Activated CD4-positive, alpha-beta memory T cell treated with anti-CD3 and anti-CD28 coated beads for 36 hours (primary cell): ENCODE measurements at regions of chr2 and their contacts with region 1.

Region 1: GRCh38 chr2:86440631-86441391 is at the start of gene KDM3A:
- DNase-seq: peak; percentile 100
- H3K4me3 Mint-ChIP-seq: peak within 1 kb of the TSS; percentile 94
- H3K27ac Mint-ChIP-seq: peak within 1 kb of the TSS; percentile 100
- H3K4me1 Mint-ChIP-seq: peaks cover 37% of the 10 kb centered on the region
- H3K27me3 Mint-ChIP-seq: no peaks in the 10 kb centered on the region
- total RNA-seq, gene KDM3A: 55.6 to 64.9 TPM

Region 2: DNA sequence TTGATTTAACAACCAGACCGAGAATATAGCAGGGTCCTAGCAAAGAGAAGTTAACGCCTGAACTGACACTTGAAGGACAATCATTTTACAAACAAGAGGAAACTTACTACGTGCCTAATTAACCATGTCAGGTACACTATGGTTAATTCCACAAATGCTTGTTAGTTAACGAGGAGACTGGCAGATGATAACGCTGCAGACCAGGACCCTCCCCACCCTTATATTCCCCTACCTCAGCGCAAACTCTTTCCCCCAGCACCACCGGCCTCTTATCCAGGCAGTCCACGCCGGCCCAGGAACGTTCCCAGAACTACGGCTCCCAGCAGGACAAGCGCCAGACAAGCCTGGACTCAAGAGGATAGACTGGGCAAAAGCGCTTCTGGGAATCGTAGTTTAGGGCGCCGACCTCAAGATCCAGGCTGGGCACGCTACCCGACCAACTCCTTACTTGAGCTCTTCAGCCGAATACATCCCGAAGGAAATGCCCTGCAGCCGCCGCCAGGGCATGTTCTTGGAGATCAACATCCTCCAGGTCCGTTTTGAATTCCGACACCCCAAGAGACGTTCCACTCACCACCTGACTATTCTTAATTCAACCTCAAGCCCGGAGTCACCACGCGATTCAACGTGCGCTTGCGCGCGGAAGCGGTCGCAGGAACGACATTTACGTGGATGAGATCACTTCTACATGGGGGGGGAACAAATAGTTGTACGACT is 335.4 kb before region 1 on chr2 and contains the start of gene POLR1A:
- CTCF ChIA-PET with region 1: no interaction called
- POLR2A ChIA-PET with region 1: no interaction called
- intact Hi-C with region 1: loop called (anchors 5 kb)
- DNase-seq: peak; percentile 90
- H3K4me3 Mint-ChIP-seq: peak within 1 kb of the TSS; percentile 94
- H3K27ac Mint-ChIP-seq: peak within 1 kb of the TSS; percentile 95
- H3K4me1 Mint-ChIP-seq: peaks cover 61% of the 10 kb centered on the region
- H3K27me3 Mint-ChIP-seq: no peaks in the 10 kb centered on the region
- total RNA-seq, gene POLR1A: 27.2 to 33.8 TPM

Region 3: GRCh38 chr2:86358957-86359356 is 81.9 kb before region 1 on chr2:
- CTCF ChIA-PET with region 1: no interaction called
- POLR2A ChIA-PET with region 1: no interaction called
- intact Hi-C with region 1: no loop called
- DNase-seq: no peak
- H3K4me3 Mint-ChIP-seq: no peak overlapping the region
- H3K27ac Mint-ChIP-seq: no peak overlapping the region
- H3K4me1 Mint-ChIP-seq: no peaks in the 10 kb centered on the region
- H3K27me3 Mint-ChIP-seq: peaks cover 2% of the 10 kb centered on the region

Region 4: GRCh38 chr2:86464652-86465051 is 23.8 kb after region 1 on chr2:
- CTCF ChIA-PET with region 1: interaction called, 3 read pairs
- POLR2A ChIA-PET with region 1: interaction called, 21 read pairs
- intact Hi-C with region 1: loop called (anchors 2 kb)
- DNase-seq: peak; percentile 58
- H3K4me3 Mint-ChIP-seq: no peak overlapping the region
- H3K27ac Mint-ChIP-seq: peak overlapping the region; percentile 66
- H3K4me1 Mint-ChIP-seq: peaks cover 56% of the 10 kb centered on the region
- H3K27me3 Mint-ChIP-seq: no peaks in the 10 kb centered on the region

Region 5: GRCh38 chr2:86562922-86563649 is 122.3 kb after region 1 on chr2 and contains the start of gene CHMP3:
- CTCF ChIA-PET with region 1: no interaction called
- POLR2A ChIA-PET with region 1: interaction called, 7 read pairs
- intact Hi-C with region 1: loop called (anchors 1 kb)
- DNase-seq: peak; percentile 98
- H3K4me3 Mint-ChIP-seq: peak within 1 kb of the TSS; percentile 94
- H3K27ac Mint-ChIP-seq: peak within 1 kb of the TSS; percentile 98
- H3K4me1 Mint-ChIP-seq: peaks cover 27% of the 10 kb centered on the region
- H3K27me3 Mint-ChIP-seq: no peaks in the 10 kb centered on the region
- total RNA-seq, gene CHMP3: 36.5 to 38.6 TPM

Region 6: DNA sequence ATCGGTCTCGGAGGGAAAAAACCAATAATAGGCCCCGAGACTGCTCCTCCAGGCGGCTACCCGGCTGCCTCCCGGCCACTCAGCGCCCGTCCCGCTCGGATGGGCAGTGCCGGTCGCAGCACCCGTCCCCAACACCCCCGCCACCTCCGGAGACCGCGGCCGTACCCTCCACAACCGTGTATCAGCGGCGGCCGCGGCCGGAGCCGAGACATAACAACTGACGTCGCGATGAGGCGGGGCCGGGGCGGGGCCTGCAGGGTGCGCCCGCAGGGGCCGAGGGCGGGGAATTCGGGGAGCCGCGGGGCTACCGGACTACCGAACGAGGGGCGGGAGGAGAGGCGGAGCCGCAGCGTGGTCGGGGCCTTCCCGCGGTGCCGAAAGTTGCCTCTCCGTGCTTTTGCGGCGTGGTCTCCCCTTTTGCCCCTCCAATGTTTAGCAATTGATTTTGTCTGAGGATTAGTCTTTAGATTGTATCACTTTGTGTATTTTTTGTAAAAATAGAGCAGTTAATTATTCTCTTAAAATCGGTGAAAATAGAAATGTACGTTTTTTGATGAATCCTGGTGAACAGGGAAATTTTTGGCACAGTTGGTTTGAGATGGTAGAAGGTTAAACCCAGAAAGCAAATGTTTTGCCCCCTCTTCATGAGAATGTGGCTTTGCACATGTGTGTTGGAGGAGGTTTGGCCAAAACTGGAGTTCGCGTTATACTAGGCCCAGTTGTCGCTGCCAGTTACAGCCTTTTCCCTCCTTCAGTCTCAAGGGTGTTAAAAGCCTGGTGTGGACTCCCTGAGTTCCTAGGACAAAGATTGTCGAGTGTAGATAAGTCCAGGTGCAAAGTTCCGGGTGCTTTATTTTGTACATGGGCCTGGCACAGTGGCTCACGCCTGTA is 183.1 kb after region 1 on chr2 and contains the start of gene RNF103:
- CTCF ChIA-PET with region 1: no interaction called
- POLR2A ChIA-PET with region 1: interaction called, 21 read pairs
- intact Hi-C with region 1: loop called (anchors 1 kb)
- DNase-seq: peak; percentile 95
- H3K4me3 Mint-ChIP-seq: peak within 1 kb of the TSS; percentile 95
- H3K27ac Mint-ChIP-seq: peak within 1 kb of the TSS; percentile 92
- H3K4me1 Mint-ChIP-seq: peaks cover 32% of the 10 kb centered on the region
- H3K27me3 Mint-ChIP-seq: peaks cover 4% of the 10 kb centered on the region
- total RNA-seq, gene RNF103: 12.3 to 13.1 TPM